ENCODE measurements at regions of chr3 and their contacts with region 1.

Region 1: GRCh38 chr3:105119801-105120340 is 246.8 kb upstream of the ALCAM start:
- DNase-seq: no peak

Region 2: GRCh38 chr3:103786296-103786695 is 1333.6 kb before region 1 on chr3:
- intact Hi-C with region 1: loop called in 1 of 2 experiments (anchors 5 kb)
- DNase-seq: no peak

Region 3: DNA sequence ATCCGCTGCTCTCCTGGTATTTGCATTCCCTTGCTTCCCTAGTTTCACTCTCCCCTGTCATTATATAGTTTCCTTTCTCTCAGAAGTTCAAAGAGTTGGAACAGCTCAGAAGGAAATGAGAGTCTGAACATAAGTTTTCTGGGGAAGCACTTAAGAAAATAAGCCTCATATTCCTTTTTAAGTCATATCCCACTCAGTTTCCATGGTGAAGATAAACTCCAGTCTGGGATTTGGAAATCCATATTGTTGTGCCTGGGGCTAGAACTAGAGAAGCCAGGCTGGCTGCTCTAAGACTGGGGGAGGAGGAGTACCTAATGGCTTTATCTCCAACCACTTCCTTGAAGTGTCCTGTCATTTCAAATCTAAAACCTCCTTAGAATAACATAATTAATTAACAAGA is 112.7 kb after region 1 on chr3:
- intact Hi-C with region 1: no loop called
- DNase-seq: no peak